ENCODE measurements at regions of chr17 and their contacts with region 1.

Region 1: GRCh38 chr17:61452301-61453290 is at the start of gene TBX4:
- DNase-seq: no peak
- ATAC-seq: no peak
- H3K4me3 Mint-ChIP-seq: peak within 1 kb of the TSS; percentile 48
- H3K27ac Mint-ChIP-seq: no peak within 1 kb of the TSS
- H3K4me1 Mint-ChIP-seq: peaks cover 32% of the 10 kb centered on the region
- H3K27me3 Mint-ChIP-seq: peaks cover 61% of the 10 kb centered on the region
- CTCF ChIP-seq: no peak
- total RNA-seq, gene TBX4: not detected in 2 replicates

Region 2: DNA sequence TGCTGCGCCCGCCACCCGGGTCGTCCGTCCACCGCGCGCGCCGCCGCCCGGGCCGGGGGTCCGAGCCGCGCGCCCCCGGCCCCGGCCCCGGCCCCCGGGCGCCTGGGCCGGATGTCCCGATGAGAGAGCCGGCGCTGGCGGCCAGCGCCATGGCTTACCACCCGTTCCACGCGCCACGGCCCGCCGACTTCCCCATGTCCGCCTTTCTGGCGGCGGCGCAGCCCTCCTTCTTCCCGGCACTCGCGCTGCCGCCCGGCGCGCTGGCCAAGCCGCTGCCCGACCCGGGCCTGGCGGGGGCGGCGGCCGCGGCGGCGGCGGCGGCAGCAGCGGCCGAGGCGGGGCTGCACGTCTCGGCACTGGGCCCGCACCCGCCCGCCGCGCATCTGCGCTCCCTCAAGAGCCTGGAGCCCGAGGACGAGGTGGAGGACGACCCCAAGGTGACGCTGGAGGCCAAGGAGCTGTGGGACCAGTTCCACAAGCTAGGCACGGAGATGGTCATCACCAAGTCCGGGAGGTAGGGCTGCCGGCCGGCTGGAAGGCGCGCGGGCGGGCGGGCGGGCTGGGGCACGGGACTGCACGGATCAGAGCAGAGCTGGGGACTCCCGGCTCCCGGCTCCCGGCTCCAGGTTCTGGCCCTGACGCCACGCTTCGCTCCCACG is 52.4 kb before region 1 on chr17:
- CTCF ChIA-PET with region 1: no interaction called
- POLR2A ChIA-PET with region 1: no interaction called
- intact Hi-C with region 1: loop called (anchors 1 kb)
- DNase-seq: no peak
- ATAC-seq: no peak
- H3K4me3 Mint-ChIP-seq: peak overlapping the region; percentile 70
- H3K27ac Mint-ChIP-seq: no peak overlapping the region
- H3K4me1 Mint-ChIP-seq: peaks cover 51% of the 10 kb centered on the region
- H3K27me3 Mint-ChIP-seq: peaks cover 51% of the 10 kb centered on the region
- CTCF ChIP-seq: no peak